Right ventricle myocardium inferior (tissue), 1 donor: ENCODE measurements at regions of chr6 and their contacts with region 1.

Region 1: GRCh38 chr6:105992315-105992961 is 93.7 kb upstream of the PRDM1 start:
- DNase-seq: peak; percentile 92
- ATAC-seq: peak; percentile 92

Region 2: GRCh38 chr6:105793130-105793529 is 199.3 kb before region 1 on chr6:
- intact Hi-C with region 1: loop called (anchors 10 kb)
- DNase-seq: no peak
- ATAC-seq: no peak

Region 3: DNA sequence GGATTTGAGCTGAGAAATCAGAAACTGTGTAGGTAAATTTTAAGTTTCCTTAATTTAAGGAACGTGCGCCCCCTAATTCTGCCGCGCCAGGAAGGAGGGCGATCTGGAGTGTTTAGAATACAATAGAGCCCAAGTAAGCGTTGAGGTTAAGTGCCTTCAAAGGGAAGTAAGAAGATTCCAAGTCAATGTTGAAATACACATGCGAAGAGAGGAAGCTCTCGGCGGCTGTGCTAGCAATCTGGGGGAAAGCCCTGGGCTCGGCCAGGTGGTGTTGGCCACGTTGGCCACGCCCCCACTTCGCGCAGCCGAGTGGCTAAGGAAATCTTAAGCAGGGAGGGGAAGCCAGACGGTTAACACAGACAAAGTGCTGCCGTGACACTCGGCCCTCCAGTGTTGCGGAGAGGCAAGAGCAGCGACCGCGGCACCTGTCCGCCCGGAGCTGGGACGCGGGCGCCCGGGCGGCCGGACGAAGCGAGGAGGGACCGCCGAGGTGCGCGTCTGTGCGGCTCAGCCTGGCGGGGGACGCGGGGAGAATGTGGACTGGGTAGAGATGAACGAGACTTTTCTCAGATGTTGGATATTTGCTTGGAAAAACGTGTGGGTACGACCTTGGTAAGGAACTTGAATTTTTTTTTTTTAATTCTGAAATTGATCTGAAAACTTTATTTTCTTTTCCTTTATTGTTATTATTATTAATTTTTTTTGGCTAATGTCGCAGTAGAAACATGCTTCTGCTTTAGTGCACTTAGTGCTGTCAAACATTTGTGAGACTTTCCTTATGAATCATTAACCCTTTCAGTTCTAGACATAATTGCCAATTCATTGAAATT is 93.8 kb after region 1 on chr6 and contains the start of gene PRDM1:
- intact Hi-C with region 1: loop called (anchors 5 kb)
- DNase-seq: peak; percentile 94
- ATAC-seq: peak; percentile 69
- total RNA-seq, gene PRDM1: 0.87 TPM

Region 4: GRCh38 chr6:106145741-106146227 is 153.3 kb after region 1 on chr6:
- intact Hi-C with region 1: no loop called
- DNase-seq: no peak
- ATAC-seq: no peak

Region 5: GRCh38 chr6:106199998-106200397 is 207.6 kb after region 1 on chr6:
- intact Hi-C with region 1: no loop called
- DNase-seq: no peak
- ATAC-seq: no peak

Region 6: DNA sequence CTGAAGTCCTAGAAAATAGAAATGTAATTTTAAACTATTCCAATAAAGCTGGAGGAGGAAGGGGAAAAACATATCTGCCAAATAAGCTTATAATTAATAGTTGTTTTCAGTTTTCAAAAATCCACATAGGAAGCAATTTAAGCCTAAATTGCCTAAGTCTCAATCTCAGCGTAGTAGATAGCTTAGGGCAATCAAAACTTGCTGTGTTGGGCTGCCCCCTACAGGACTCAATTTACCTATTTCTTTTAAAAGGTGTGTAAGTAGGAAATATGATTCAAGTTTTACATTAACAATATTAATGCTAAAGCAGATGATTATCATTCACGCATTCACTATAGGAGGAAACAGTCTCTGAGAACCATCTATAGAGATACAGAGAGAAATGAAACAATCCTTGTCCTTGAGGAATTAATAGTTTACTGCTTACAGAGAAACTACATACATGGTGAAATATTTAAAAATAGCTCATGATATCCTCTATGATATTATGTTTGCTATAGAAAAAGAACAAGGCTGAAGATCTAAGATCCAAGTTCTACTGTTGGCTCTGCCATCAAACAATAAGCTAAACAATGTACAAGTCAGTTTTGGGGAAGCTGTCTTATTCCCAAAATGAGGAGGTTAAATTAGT is 231.0 kb after region 1 on chr6:
- intact Hi-C with region 1: loop called (anchors 10 kb)
- DNase-seq: no peak
- ATAC-seq: no peak